ENCODE measurements at regions of chr1 and their contacts with region 1.

Region 1: GRCh38 chr1:51953079-51953478 is 37.4 kb downstream of the RAB3B start:
- DNase-seq: no peak
- ATAC-seq: no peak
- H3K4me3 ChIP-seq: no peak overlapping the region
- H3K27ac ChIP-seq: no peak overlapping the region
- H3K4me1 ChIP-seq: no peaks in the 10 kb centered on the region
- H3K27me3 ChIP-seq: peaks cover 0 to 11% (median 0%) of the 10 kb centered on the region in 7 donors
- CTCF ChIP-seq: no peak

Region 2: DNA sequence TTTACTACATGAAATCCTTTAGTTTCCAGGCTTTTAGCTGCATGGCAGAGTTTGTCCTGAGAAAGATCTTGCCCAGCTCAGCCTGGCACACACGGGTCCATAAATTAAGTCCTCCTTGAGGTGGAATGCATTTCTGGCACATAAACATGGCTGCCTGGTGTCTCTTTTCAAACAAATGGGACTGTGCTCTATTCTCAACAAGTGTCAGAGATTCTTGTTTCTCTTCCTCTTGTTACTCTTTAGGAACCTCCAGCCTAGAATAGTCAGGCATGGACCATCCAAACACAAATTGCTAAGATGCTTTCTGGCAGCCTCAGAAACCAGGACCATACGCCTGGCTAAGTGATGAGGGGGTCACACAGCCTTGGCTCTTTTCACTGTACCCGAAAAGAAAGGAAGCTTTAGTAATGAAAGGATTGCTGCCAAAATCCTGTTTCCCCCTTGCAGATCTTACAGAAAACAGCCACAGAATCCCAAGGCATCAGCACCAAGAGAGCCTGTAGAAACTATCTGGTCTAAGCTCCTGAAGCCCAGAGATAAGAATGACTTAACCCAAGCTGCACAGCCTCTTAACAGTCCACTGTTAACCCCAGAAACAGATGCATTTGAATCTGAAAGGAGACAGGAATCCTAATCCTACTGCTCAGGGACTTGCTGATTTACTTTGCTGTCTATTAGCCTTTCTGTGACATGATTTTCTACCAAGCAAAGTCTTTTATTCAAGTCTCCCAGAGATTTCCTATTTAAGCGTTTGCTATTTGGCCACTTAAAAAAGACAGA is 42.7 kb before region 1 on chr1:
- intact Hi-C with region 1: loop called in 1 of 10 experiments (anchors 5 kb)
- DNase-seq: no peak
- ATAC-seq: no peak
- H3K4me3 ChIP-seq: no peak overlapping the region
- H3K27ac ChIP-seq: no peak overlapping the region
- H3K4me1 ChIP-seq: no peaks in the 10 kb centered on the region
- H3K27me3 ChIP-seq: peaks cover 0 to 63% (median 32%) of the 10 kb centered on the region in 7 donors
- CTCF ChIP-seq: no peak